Body of pancreas (tissue), 4 donors: ENCODE measurements at regions of chr18 and their contacts with region 1.

Region 1: GRCh38 chr18:2932247-2933181 is 80.4 kb downstream of the LPIN2 start:
- DNase-seq: peak; percentile 45 to 78 (median 54)
- ATAC-seq: peak; percentile 74
- H3K4me3 ChIP-seq: no peak overlapping the region
- H3K27ac ChIP-seq: no peak overlapping the region
- H3K4me1 ChIP-seq: peaks cover 4% of the 10 kb centered on the region
- H3K27me3 ChIP-seq: no peaks in the 10 kb centered on the region
- CTCF ChIP-seq: peak; percentile 38 to 88 (median 79)
- POLR2A ChIP-seq: no peak

Region 2: DNA sequence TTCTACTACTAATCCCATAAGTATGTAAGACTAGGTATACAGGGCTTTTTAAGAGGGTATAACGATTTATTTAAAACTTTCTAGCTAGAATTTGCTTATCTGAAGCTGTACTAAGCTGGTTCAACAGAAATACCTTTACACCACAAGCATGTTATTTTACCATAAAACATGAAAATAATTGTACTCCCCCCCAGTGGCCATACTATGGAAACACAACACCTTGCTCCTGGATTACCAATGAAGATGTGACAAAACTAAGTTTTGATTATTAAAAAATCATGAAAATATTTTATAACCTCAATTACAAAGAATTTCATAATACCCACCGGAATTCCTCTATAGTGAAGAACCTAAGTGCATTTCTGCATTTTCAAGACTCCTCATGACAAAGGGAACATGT is 53.1 kb after region 1 on chr18:
- intact Hi-C with region 1: loop called (anchors 10 kb)
- DNase-seq: no peak
- ATAC-seq: peak; percentile 65
- H3K4me3 ChIP-seq: no peak overlapping the region
- H3K27ac ChIP-seq: peak overlapping the region; percentile 4 to 82 (median 81)
- H3K4me1 ChIP-seq: peaks cover 56% of the 10 kb centered on the region
- H3K27me3 ChIP-seq: no peaks in the 10 kb centered on the region
- CTCF ChIP-seq: peak in 6 of 7 experiments; percentile 49 to 66 (median 60)
- POLR2A ChIP-seq: no peak

Region 3: GRCh38 chr18:3016585-3017297 is 84.2 kb after region 1 on chr18:
- intact Hi-C with region 1: no loop called
- DNase-seq: no peak
- ATAC-seq: no peak
- H3K4me3 ChIP-seq: no peak overlapping the region
- H3K27ac ChIP-seq: peak overlapping the region in 1 of 4 donors; percentile 49
- H3K4me1 ChIP-seq: peaks cover 11% of the 10 kb centered on the region
- H3K27me3 ChIP-seq: no peaks in the 10 kb centered on the region
- CTCF ChIP-seq: no peak
- POLR2A ChIP-seq: peak in 1 of 3 donors; percentile 45

Region 4: GRCh38 chr18:3245853-3246634 is 313.5 kb after region 1 on chr18:
- intact Hi-C with region 1: loop called (anchors 5 kb)
- DNase-seq: peak; percentile 91 to 94 (median 92)
- ATAC-seq: peak; percentile 71
- H3K4me3 ChIP-seq: peak overlapping the region; percentile 12 to 13
- H3K27ac ChIP-seq: peak overlapping the region; percentile 98 to 99 (median 99)
- H3K4me1 ChIP-seq: peaks cover 38% of the 10 kb centered on the region
- H3K27me3 ChIP-seq: no peaks in the 10 kb centered on the region
- CTCF ChIP-seq: peak; percentile 92 to 99 (median 97)
- POLR2A ChIP-seq: peak in 1 of 3 donors; percentile 22